PC-9 (cell line): ENCODE measurements at regions of chr16 and their contacts with region 1.

Region 1: DNA sequence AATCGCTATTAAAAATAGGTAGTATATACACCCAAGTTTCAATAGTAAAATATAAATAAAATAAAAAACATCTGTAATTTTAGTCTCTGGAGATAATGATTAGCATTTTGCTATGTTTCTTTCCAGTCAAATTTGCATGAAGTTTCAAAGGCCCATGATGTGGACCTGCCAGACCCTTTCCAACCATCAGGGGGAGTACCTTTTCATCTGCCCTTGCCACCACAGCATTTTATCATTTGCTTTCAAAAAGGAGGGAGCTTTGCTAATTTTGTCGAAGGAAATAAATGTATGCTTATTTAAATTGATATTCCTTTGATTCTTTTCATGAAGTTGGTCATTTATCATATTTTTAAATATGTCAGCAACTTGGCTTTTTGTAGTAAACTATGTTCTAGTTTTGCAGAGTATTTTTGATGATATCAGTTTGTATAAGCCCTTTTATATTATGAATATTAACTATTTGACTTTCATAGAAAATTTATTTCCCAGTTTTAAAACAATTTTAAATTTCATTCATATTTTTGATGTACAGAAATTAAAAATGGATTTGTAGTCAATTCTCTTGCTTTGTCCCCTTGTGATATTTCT is 115.2 kb upstream of the NETO2 start:
- DNase-seq: no peak
- H3K4me3 ChIP-seq: no peak overlapping the region
- H3K27ac ChIP-seq: no peak overlapping the region
- H3K4me1 ChIP-seq: no peaks in the 10 kb centered on the region
- H3K27me3 ChIP-seq: no peaks in the 10 kb centered on the region
- CTCF ChIP-seq: peak; percentile 71

Region 2: GRCh38 chr16:47204736-47205504 is 54.0 kb before region 1 on chr16:
- CTCF ChIA-PET with region 1: no interaction called
- POLR2A ChIA-PET with region 1: no interaction called
- intact Hi-C with region 1: no loop called
- DNase-seq: no peak
- H3K4me3 ChIP-seq: no peak overlapping the region
- H3K27ac ChIP-seq: no peak overlapping the region
- H3K4me1 ChIP-seq: no peaks in the 10 kb centered on the region
- H3K27me3 ChIP-seq: no peaks in the 10 kb centered on the region
- CTCF ChIP-seq: no peak

Region 3: GRCh38 chr16:47278306-47278970 is 19.5 kb after region 1 on chr16:
- CTCF ChIA-PET with region 1: no interaction called
- POLR2A ChIA-PET with region 1: interaction called, 11 read pairs
- intact Hi-C with region 1: no loop called
- DNase-seq: no peak
- H3K4me3 ChIP-seq: no peak overlapping the region
- H3K27ac ChIP-seq: no peak overlapping the region
- H3K4me1 ChIP-seq: no peaks in the 10 kb centered on the region
- H3K27me3 ChIP-seq: no peaks in the 10 kb centered on the region
- CTCF ChIP-seq: no peak